Ovary (tissue), 10 donors: ENCODE measurements at regions of chr12 and their contacts with region 1.

Region 1: GRCh38 chr12:107845980-107846659 is 71.6 kb downstream of the ASCL4 start:
- DNase-seq: peak in 1 of 5 donors; percentile 8
- H3K4me3 ChIP-seq: no peak overlapping the region
- H3K27ac ChIP-seq: no peak overlapping the region
- H3K4me1 ChIP-seq: peaks cover 2% of the 10 kb centered on the region
- H3K27me3 ChIP-seq: no peaks in the 10 kb centered on the region
- CTCF ChIP-seq: no peak
- EP300 ChIP-seq: no peak
- POLR2A ChIP-seq: no peak

Region 2: DNA sequence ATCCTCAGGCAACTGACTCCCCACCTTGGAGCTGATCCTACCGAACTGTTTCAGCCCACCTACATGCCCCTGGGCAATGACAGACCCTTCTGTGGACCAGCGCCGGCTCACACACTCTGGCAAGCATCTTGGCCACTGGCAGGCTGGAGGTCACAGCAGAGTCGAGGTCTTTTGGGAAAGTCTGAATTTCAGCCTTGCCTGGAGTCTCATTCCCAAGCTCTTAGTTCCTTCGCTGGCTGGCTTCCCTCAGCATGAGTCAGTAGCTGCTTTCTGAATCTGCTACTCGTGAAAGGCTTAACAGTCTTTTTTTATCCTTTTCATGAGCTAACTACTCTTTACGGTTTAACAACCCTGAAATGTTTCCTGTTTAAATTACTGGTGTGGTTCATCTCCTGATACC is 27.1 kb before region 1 on chr12:
- intact Hi-C with region 1: loop called in 1 of 4 experiments (anchors 1 kb)
- DNase-seq: no peak
- H3K4me3 ChIP-seq: no peak overlapping the region
- H3K27ac ChIP-seq: no peak overlapping the region
- H3K4me1 ChIP-seq: no peaks in the 10 kb centered on the region
- H3K27me3 ChIP-seq: no peaks in the 10 kb centered on the region
- CTCF ChIP-seq: no peak
- EP300 ChIP-seq: no peak
- POLR2A ChIP-seq: no peak

Region 3: DNA sequence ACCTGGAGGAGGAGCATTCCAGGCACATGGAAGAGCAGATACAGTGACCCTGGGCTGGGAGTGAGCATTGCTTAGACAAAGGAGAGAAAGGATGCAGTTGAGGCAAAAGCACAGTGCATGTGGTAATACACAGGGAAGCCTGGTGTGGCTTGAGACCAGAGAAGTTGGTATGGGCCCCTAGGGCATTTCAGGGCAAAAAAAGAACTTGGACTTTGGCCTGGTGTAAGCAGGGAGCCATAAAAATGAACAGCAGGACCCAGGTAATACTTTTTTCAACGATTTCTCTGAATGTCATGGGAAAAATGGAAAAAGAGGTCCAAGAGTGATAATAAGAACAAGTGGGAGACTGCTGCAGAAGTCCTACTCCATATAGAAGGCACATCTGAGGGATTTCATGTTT is 92.3 kb after region 1 on chr12:
- intact Hi-C with region 1: no loop called
- DNase-seq: no peak
- H3K4me3 ChIP-seq: no peak overlapping the region
- H3K27ac ChIP-seq: no peak overlapping the region
- H3K4me1 ChIP-seq: no peaks in the 10 kb centered on the region
- H3K27me3 ChIP-seq: no peaks in the 10 kb centered on the region
- CTCF ChIP-seq: no peak
- EP300 ChIP-seq: no peak
- POLR2A ChIP-seq: no peak